Motor neuron (in vitro differentiated cells): ENCODE measurements at regions of chr22 and their contacts with region 1.

Region 1: GRCh38 chr22:36856121-36856791 is 4.5 kb upstream of the NCF4 start:
- ATAC-seq: peak; percentile 91 to 98 (median 96)
- H3K4me3 ChIP-seq: no peak overlapping the region
- H3K27ac ChIP-seq: no peak overlapping the region
- H3K4me1 ChIP-seq: peaks cover 0 to 12% of the 10 kb centered on the region in 2 donors

Region 2: GRCh38 chr22:36569999-36570398 is 286.3 kb before region 1 on chr22:
- in situ Hi-C with region 1: loop called in 1 of 9 experiments (anchors 25 kb)
- ATAC-seq: peak; percentile 48 to 88 (median 72)
- H3K4me3 ChIP-seq: no peak overlapping the region
- H3K27ac ChIP-seq: peak overlapping the region in 1 of 2 donors; percentile 31
- H3K4me1 ChIP-seq: peaks cover 0 to 6% of the 10 kb centered on the region in 2 donors

Region 3: DNA sequence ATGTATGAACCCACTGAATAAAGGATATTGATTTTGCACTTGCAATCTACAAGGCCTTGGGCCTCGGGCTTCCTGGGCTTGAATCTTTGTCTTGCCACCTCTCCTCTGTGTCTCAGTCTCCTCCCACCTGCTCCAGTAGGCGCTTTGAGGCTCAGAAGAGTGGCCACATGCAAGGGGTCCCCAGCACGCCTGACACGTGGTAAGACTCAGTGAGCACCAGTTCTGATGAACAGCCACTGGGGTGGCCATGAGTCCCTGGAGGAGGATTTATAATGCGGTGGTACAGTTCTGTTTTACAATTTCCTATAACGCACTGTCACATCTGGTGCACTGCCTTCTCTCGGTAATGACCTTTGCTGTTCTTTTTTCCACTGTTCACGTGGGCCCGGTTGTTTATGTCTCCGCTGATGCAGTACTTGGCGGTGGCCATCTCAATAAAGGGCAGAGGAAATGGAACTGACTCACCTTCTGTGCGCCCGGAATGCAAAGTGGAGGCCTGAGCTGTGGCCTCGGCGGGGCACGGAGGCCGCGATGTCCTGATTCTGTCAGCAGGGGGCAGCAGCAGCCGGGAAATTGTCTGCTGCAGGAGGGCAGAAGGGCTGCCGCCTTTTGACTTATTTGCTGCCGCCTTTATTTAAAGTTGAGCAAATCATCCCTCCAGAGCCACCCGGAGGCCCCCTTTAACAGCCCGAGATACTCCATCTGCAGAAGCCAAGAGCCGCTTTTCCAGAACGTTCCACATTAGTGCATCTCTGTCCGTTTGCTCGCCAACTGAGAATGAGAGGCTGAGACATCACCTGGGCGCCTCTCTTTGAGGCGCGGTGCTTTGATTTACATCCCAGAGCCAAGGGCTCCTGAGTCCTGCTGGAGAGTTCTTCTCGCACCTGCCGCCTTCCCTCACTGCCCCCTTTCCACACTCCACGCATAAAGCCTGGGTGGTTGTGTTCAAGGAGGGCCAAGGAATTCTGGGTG is 74.3 kb before region 1 on chr22:
- in situ Hi-C with region 1: loop called in 1 of 9 experiments (anchors 10 kb)
- ATAC-seq: peak; percentile 96 to 99 (median 98)
- H3K4me3 ChIP-seq: no peak overlapping the region
- H3K27ac ChIP-seq: peak overlapping the region; percentile 50 to 74
- H3K4me1 ChIP-seq: peaks cover 16 to 20% of the 10 kb centered on the region in 2 donors